ENCODE measurements at regions of chr22 and their contacts with region 1.

Region 1: GRCh38 chr22:25027959-25028840 is 75.7 kb downstream of the KIAA1671 start:
- DNase-seq: peak in 1 of 2 experiments; percentile 61
- H3K4me3 ChIP-seq: no peak overlapping the region
- H3K4me1 ChIP-seq: peaks cover 10% of the 10 kb centered on the region
- H3K27me3 ChIP-seq: no peaks in the 10 kb centered on the region

Region 2: DNA sequence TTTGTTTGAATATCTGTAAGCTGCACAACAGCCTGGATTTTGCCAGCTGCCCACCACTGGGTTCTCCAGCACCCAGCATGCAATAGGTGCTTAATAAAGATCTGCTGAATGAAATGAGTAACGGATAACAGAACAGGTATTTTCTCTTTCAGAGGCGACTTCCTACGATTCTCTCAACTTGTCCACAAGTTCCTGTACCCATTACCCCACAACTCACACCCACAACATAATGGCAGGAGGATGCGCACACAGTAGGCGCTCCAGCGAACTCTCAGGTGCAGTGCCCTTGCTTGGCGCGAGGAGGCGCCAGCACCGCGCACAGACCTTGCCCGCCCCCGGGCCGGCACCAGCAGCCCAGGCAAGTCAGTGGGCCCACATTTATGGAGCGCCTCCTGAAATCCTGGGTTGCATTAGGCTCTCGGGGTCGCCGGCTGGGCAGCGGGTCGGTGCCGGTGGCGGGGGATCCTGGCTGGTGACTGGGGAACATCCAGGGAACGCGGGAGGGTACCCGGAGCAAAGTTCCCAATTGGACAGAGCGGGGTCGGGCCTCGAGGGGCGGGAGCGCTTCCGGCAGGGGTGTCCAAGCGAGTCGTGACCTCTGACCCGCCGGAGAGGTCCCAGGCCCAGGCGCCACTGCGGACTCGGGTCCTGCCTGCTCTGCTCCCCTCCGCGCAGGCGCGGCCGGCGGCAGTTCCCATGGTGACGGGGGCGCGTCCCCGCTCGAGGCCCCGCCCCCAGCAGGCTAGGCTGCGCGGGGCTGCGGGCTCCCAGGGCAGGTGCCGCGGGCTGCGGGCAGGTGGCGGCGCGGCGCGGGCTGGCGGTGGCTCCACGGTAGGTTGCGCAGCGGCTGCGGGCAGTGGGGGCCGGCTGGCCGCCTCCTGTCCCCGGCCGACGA is 76.0 kb before region 1 on chr22 and contains the start of gene KIAA1671:
- in situ Hi-C with region 1: loop called (anchors 5 kb)
- DNase-seq: peak; percentile 80 to 91
- H3K4me3 ChIP-seq: peak within 1 kb of the TSS; percentile 48
- H3K4me1 ChIP-seq: peaks cover 14% of the 10 kb centered on the region
- H3K27me3 ChIP-seq: no peaks in the 10 kb centered on the region

Region 3: DNA sequence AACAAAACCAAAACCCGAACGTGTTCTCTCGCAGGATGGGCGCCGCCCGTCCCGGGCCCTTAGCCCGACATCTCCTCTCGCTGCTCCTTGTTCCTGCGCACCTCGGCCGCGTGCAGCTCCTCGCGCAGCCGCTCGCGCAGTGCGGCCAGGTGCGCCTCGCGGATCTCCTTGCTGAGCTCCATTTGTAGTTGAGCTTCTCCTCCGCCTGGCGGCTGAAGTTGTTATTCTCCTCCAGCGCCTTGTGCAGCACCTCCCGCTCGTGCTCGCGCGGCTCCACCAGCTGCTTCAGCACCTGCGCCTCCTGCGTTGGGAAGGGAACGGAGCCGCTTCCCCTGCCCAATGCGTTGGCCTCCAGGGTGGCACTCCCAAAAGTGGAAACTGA is 151.0 kb after region 1 on chr22:
- in situ Hi-C with region 1: no loop called
- DNase-seq: no peak
- H3K4me3 ChIP-seq: no peak overlapping the region
- H3K4me1 ChIP-seq: no peaks in the 10 kb centered on the region
- H3K27me3 ChIP-seq: no peaks in the 10 kb centered on the region

Measured in HAP-1 (cell line).